AG04450 (cell line): ENCODE measurements at regions of chr6 and their contacts with region 1.

Region 1: DNA sequence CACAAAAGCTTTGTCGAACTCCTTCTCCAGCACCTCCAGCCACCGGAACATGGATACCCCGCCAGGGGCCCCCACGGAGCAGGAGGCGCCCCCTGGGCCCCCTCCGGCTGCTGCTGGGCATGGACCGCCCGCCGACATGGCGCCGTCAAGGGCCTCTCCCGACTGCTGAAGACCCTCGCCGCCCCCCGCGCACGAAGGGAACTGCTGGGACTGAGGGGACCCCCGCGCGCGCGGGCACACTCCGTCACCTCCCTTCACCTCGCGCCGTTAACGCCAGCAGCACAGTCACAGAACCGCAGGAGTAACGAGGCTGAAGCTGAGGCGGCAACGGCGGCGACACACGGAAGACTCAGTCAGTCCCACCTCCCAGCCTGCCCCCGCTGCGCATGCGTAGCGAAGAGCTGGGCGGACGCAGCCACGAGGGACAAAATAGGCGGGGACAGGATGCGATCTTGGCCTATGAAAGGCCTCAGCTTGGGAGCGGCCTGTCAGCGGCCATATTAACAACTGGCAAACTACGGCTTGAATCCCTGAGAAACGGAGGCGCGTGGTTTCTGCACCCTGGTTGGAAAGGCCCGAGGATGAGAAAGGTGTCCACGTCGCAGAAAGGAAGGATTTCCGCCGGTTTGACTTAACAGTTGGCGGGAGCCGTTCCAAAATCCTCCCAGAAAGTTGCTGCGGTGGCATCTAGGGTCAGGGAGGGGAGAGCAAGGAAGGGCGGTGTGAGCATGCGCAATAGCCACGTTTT is at the start of gene GOPC:
- DNase-seq: peak; percentile 96
- H3K4me3 ChIP-seq: peak within 1 kb of the TSS; percentile 93
- H3K27ac ChIP-seq: peak within 1 kb of the TSS; percentile 92
- H3K27me3 ChIP-seq: no peaks in the 10 kb centered on the region
- CTCF ChIP-seq: peak; percentile 33
- polyA plus RNA-seq, gene GOPC: 25.0 and 37.8 TPM in 2 replicates

Region 2: GRCh38 chr6:117346142-117346930 is 256.0 kb before region 1 on chr6:
- CTCF ChIA-PET with region 1: interaction called, 68 read pairs
- POLR2A ChIA-PET with region 1: no interaction called
- DNase-seq: no peak
- H3K4me3 ChIP-seq: no peak overlapping the region
- H3K27ac ChIP-seq: no peak overlapping the region
- H3K27me3 ChIP-seq: no peaks in the 10 kb centered on the region
- CTCF ChIP-seq: peak; percentile 49

Region 3: GRCh38 chr6:117352466-117353081 is 249.8 kb before region 1 on chr6:
- CTCF ChIA-PET with region 1: interaction called, 42 read pairs
- POLR2A ChIA-PET with region 1: no interaction called
- DNase-seq: no peak
- H3K4me3 ChIP-seq: no peak overlapping the region
- H3K27ac ChIP-seq: no peak overlapping the region
- H3K27me3 ChIP-seq: no peaks in the 10 kb centered on the region
- CTCF ChIP-seq: peak; percentile 62

Region 4: GRCh38 chr6:117399924-117400323 is 202.4 kb before region 1 on chr6:
- CTCF ChIA-PET with region 1: interaction called, 145 read pairs
- POLR2A ChIA-PET with region 1: no interaction called
- DNase-seq: no peak
- H3K4me3 ChIP-seq: no peak overlapping the region
- H3K27ac ChIP-seq: no peak overlapping the region
- H3K27me3 ChIP-seq: peaks cover 2% of the 10 kb centered on the region
- CTCF ChIP-seq: peak; percentile 52

Region 5: DNA sequence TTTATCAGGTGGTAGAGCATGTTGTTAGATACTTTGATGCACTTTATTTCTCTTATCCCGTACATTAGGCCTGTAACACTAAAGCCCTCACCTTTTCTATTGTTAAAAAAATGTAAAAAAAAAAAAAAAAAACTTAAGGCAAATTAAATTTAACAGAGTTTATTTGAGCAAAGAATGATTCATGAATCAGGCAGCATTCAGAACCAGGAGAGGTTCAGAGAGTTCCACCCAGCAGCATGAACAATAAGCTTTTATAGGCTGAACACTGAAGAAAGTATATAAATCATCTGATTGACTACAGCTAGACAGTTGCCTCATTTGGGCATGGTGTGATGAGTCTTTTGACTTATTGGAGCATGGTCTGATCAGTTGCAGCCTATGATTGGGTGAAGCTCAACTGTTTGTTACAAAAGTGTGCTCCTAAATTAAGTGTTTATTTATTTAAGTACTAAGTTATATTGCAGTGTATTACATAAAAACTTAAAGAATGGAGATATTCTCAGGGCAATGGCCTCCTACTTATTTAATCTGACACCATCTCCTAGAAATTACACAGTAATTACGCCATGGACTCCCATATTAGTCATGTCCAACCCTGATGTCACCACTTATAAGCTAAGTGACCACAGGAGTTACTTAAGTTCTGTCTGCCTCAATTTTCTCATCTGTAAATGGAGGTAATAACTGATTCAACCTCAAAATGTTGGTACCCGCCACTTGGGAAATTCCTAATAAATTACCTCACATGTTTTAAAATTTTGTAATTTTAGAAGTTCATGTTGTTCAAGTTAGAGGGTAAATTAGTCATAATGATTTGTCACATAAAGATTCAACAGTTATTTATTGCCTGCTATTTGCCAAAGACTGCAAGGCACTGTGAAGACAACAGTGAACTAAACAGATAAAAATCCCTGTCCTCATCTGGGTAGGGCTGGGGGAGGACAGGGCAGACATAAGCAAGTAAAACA is 161.5 kb before region 1 on chr6:
- CTCF ChIA-PET with region 1: interaction called, 39 read pairs
- POLR2A ChIA-PET with region 1: interaction called, 3 read pairs
- DNase-seq: no peak
- H3K4me3 ChIP-seq: no peak overlapping the region
- H3K27ac ChIP-seq: no peak overlapping the region
- H3K27me3 ChIP-seq: no peaks in the 10 kb centered on the region
- CTCF ChIP-seq: no peak

Region 6: DNA sequence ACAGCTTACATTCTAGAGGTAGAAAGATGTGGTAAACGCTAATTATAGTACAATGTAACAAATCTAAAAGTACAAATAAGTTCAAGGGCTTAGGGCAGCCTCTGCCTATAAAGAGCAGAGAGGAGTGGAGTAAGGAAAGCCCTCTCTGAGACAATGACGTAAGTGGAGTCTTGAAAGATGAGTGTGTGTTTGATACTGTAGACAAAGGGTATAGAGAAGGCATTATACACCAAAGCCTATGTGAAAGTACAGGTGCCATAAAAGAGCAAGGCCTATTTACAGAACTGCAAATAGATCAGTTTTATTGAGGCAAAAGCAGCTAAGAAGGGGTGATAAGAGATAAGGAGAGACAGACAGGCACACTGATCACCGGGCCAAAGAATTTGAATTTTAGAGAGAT is 10.9 kb before region 1 on chr6:
- CTCF ChIA-PET with region 1: interaction called, 10 read pairs
- POLR2A ChIA-PET with region 1: interaction called, 3 read pairs
- DNase-seq: no peak
- H3K4me3 ChIP-seq: no peak overlapping the region
- H3K27ac ChIP-seq: no peak overlapping the region
- H3K27me3 ChIP-seq: no peaks in the 10 kb centered on the region
- CTCF ChIP-seq: no peak